Tibial artery (tissue), 4 donors: ENCODE measurements at regions of chrX and their contacts with region 1.

Region 1: DNA sequence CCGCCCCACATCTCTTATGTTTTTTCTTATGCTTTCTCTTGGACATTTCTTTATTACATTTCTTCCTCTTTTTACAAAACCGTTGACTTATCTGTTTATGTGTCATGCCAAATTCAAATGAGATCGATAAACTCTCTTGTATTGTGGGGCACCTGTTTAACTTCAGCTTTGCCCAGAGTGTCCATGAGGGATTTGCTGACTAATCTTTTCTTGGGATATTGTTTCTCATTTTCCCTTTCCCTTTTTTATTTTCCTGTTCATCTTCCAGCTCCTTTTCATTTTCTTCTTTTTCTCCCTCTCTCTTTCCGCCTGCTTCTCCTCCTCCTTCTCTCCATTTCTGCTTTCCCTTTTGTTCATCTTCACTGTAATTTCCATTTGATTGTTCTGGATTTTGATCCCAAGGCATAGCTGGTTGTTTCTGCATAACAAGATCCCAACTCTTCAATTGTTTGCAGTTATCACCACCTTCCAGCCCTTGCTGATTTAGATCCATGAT is 10.7 kb downstream of the TIMM8A start:
- DNase-seq: no peak
- H3K4me3 ChIP-seq: no peak overlapping the region
- H3K27ac ChIP-seq: no peak overlapping the region
- H3K4me1 ChIP-seq: no peaks in the 10 kb centered on the region
- H3K27me3 ChIP-seq: no peaks in the 10 kb centered on the region
- CTCF ChIP-seq: no peak

Region 2: GRCh38 chrX:101252634-101253033 is 85.2 kb before region 1 on chrX:
- intact Hi-C with region 1: no loop called
- DNase-seq: no peak
- H3K4me3 ChIP-seq: no peak overlapping the region
- H3K27ac ChIP-seq: no peak overlapping the region
- H3K4me1 ChIP-seq: no peaks in the 10 kb centered on the region
- H3K27me3 ChIP-seq: no peaks in the 10 kb centered on the region
- CTCF ChIP-seq: no peak

Region 3: DNA sequence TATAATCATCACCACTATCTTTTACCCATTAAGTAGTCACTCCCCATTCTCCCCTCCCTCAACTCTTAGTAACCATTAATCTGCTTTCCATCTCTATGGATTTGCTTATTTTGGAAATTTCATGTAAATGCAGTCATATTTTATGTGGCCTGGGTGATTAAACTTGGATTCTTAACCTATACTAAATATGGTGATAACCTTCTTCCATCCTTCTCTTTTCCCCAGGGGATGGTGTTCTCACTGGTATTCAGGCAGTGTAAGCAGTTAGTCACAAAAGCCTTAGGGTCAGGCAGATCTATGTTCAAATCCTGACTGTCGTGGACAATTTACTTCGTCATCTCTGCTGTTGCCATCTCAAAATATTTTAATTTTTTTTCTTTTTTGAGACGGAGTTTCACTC is 1628.9 kb after region 1 on chrX:
- intact Hi-C with region 1: loop called (anchors 5 kb)
- DNase-seq: no peak
- H3K4me3 ChIP-seq: no peak overlapping the region
- H3K27ac ChIP-seq: no peak overlapping the region
- H3K4me1 ChIP-seq: no peaks in the 10 kb centered on the region
- H3K27me3 ChIP-seq: no peaks in the 10 kb centered on the region
- CTCF ChIP-seq: no peak